ENCODE measurements at regions of chr13 and their contacts with region 1.

Region 1: DNA sequence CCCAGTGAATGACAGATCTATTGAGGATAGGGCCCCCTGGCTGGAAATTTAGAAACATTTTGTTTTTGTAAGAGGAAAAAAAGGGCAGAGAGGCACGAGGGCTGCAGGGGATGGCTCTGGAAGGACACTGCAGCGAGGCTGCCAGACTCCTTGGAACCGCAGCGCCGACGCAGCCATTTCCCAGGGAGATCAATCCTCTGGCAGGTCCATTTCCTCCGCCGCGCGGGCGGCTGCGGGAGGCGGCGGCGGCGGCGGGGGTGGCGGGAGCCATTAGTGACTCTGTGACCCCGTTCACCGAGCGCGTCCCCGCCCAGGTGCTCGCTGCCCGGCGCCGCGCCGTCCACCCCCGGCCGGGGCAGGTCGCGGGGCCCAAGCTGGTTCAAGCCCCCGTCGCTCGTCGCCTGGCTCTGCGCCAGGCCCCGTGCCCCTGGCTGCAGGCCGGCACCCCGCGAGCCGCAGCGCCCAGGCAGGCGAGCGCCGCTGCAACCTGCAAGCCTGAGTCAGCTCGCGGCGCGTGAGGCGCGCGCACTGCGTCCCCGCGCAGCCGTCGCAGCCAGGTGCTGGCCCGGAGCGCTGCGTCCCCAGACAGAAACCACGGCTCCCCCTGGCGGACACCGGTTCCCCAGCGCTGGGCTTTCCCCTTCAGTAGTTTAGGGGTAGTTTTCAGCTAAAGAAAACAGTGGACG is 192.6 kb downstream of the KATNAL1 start:
- DNase-seq: peak; percentile 92 to 93 (median 93)
- ATAC-seq: peak; percentile 84 to 91 (median 90)
- H3K4me3 ChIP-seq: peak overlapping the region; percentile 50 to 67 (median 55)
- H3K27ac ChIP-seq: peak overlapping the region; percentile 76 to 89 (median 83)
- H3K4me1 ChIP-seq: peaks cover 0 to 18% (median 6%) of the 10 kb centered on the region in 4 donors
- H3K27me3 ChIP-seq: no peaks in the 10 kb centered on the region
- CTCF ChIP-seq: peak; percentile 88 to 96 (median 94)
- POLR2A ChIP-seq: peak; percentile 82

Region 2: DNA sequence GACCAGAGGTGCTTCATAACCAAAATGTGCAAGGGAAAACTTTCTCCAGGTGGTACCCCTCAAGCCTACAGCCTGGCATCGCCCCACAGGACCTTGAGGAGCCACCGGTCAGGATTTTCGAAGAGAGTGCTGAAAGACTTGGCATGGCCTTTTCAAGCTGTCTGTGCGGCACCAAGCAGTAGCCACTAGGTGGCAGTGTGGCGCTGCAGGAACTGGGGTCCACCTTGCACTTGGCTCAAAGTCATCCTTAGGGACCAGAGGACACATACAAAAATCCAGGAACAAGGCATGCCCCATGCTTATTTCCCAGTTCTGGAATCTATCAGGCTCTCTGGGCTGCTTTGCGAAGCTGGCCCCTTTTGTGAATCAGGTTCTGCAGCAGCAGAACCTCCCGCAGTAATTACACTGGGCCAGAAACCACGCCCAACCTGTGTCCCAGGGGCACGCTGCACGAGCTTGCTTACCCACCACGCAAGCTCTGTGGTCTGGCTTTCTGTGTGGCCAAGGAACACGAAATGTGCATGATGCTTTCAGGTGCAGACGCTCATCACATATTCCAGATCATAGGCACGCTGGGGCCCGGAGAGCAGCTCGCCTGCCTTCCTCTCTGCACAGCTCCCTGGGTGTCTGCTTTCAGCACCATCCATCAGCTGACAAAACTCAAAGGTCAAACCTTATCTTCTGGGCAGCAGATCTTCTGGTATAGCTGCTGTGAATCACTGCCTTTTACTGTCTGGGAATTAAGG is 606.4 kb before region 1 on chr13:
- intact Hi-C with region 1: loop called (anchors 5 to 10 kb)
- DNase-seq: peak; percentile 81 to 86 (median 83)
- ATAC-seq: peak; percentile 90 to 97 (median 92)
- H3K4me3 ChIP-seq: no peak overlapping the region
- H3K27ac ChIP-seq: no peak overlapping the region
- H3K4me1 ChIP-seq: no peaks in the 10 kb centered on the region
- H3K27me3 ChIP-seq: no peaks in the 10 kb centered on the region
- CTCF ChIP-seq: peak; percentile 90 to 99 (median 98)
- POLR2A ChIP-seq: no peak

Region 3: GRCh38 chr13:29771247-29771646 is 343.5 kb before region 1 on chr13:
- intact Hi-C with region 1: loop called in 1 of 2 experiments (anchors 10 kb)
- DNase-seq: no peak
- ATAC-seq: peak; percentile 63 to 76 (median 72)
- H3K4me3 ChIP-seq: no peak overlapping the region
- H3K27ac ChIP-seq: no peak overlapping the region
- H3K4me1 ChIP-seq: no peaks in the 10 kb centered on the region
- H3K27me3 ChIP-seq: no peaks in the 10 kb centered on the region
- CTCF ChIP-seq: peak; percentile 52 to 62 (median 58)
- POLR2A ChIP-seq: no peak

Region 4: DNA sequence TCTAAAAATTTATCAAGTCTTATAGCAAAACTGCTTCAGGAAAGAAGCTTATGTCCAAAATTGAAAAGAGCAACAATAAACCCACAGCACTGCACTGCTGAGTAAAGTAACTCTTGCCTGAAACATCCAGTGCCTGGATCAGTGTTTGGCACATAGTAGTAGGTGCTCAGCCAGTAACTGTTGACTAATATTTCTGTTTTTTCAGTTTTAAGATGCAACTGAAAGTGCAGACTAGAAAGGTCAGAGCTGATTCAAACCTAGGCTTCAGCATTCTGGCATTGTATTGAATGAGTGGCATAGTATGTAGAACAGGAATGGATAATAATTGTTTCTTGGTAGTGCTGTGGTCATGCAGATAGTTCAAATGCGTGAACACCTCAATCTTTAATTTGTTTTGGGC is 331.9 kb before region 1 on chr13:
- intact Hi-C with region 1: loop called (anchors 10 kb)
- DNase-seq: no peak
- ATAC-seq: peak; percentile 51 to 70 (median 66)
- H3K4me3 ChIP-seq: no peak overlapping the region
- H3K27ac ChIP-seq: no peak overlapping the region
- H3K4me1 ChIP-seq: peaks cover 0 to 23% (median 9%) of the 10 kb centered on the region in 4 donors
- H3K27me3 ChIP-seq: no peaks in the 10 kb centered on the region
- CTCF ChIP-seq: no peak
- POLR2A ChIP-seq: no peak

Region 5: GRCh38 chr13:29849731-29850223 is 264.9 kb before region 1 on chr13:
- intact Hi-C with region 1: loop called in 1 of 2 experiments (anchors 10 kb)
- DNase-seq: peak; percentile 71 to 81 (median 78)
- ATAC-seq: peak; percentile 37 to 57 (median 49)
- H3K4me3 ChIP-seq: peak overlapping the region; percentile 75 to 83 (median 78)
- H3K27ac ChIP-seq: peak overlapping the region; percentile 97 to 99 (median 98)
- H3K4me1 ChIP-seq: peaks cover 0 to 17% (median 8%) of the 10 kb centered on the region in 4 donors
- H3K27me3 ChIP-seq: no peaks in the 10 kb centered on the region
- CTCF ChIP-seq: no peak
- POLR2A ChIP-seq: no peak

Region 6: DNA sequence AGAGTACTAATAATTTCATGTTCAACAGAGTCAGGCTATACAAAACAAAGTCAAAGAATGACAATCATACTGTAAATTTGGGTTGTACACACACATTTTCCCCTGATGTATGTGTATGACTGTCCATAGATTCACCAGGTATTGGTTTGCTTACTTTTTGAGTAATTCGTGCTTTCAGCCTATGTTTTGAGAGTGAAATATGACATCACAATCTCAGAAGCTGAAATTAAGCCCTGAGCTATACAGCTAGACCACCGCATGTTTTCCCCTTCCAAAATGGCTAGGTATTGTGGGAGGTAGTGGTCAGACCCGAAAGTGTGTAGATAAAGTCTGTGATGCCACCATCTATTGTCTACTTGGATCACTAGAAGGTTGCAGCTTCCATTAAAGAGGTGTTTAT is 89.8 kb after region 1 on chr13:
- intact Hi-C with region 1: no loop called
- DNase-seq: no peak
- ATAC-seq: no peak
- H3K4me3 ChIP-seq: no peak overlapping the region
- H3K27ac ChIP-seq: no peak overlapping the region
- H3K4me1 ChIP-seq: no peaks in the 10 kb centered on the region
- H3K27me3 ChIP-seq: no peaks in the 10 kb centered on the region
- CTCF ChIP-seq: no peak
- POLR2A ChIP-seq: no peak